Naive thymus-derived CD8-positive, alpha-beta T cell (primary cell): ENCODE measurements at regions of chr5 and their contacts with region 1.

Region 1: DNA sequence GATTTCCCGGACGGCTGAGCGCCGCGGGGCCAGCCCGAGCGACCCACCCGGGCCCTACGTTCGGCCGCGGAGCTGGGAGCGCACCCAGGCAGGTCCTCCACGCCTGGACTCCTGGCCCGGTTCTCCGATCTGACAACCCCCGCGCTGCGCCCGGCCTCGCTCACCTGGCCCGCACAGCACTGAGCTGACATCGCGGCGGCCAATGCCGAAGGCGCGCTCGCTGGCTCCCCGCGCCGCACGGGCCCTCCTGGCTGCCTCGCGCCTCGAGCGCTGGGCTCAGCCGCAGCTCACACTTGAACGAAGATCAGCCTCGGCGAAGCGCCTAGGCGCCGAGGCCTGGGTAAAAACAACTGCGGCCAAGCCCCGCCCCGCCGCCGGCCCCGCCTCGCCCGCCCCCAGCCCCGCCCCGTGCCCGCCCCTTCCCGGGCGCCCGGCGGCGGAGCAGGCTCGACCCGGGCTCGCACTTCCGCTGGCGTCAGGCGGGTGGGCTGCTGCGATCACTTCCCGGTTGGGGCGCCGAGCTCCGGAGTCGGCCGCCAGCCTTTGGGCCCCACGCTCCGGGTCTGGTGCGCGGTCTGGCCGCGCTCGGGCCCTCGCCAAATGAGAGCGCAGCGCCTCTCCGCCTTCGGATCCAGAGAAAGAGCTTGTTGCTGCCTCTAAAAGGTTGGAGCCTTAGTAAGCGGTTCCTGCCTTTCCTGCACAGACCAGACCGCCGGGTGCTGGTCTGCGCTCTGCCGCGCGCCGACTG is at the start of gene SERINC5:
- DNase-seq: peak; percentile 80 to 91 (median 85)
- ATAC-seq: peak; percentile 72 to 77
- H3K4me3 Mint-ChIP-seq: peak within 1 kb of the TSS; percentile 90 to 99 (median 98)
- H3K27ac Mint-ChIP-seq: peak within 1 kb of the TSS; percentile 95 to 100 (median 98)
- H3K4me1 Mint-ChIP-seq: peaks cover 33 to 54% (median 49%) of the 10 kb centered on the region in 4 donors
- H3K27me3 Mint-ChIP-seq: no peaks in the 10 kb centered on the region
- polyA plus RNA-seq, gene SERINC5: 21.8 to 30.6 (median 24.1) TPM

Region 2: DNA sequence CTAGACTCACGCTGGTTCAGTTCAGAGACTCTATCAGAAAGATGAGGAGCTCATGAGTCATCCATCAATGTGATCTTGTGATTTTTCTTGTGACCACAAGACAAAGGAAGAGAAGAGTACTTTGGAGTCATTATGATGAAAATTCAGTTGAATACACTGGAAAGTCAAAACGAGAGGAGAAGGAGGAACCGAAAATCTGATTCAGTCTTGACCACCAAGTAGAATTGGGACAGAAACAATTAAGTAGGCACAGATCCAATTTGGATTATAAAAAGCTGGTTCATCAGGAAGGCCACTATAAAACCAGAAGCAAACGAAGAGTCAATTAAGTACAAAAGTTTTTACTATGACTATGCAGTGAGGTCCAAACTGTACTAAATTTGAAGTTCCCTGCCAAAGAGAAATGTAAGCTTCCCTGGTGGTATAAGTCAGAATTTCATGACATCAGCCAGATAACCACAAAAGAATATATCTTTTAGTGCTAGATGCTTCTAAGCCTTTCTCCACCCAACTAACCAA is 129.9 kb before region 1 on chr5:
- POLR2A ChIA-PET with region 1: interaction called, 11 read pairs
- DNase-seq: peak in 1 of 10 donors; percentile 45
- ATAC-seq: peak; percentile 76 to 79
- H3K4me3 Mint-ChIP-seq: peak overlapping the region in 8 of 10 donors; percentile 46 to 76 (median 60)
- H3K27ac Mint-ChIP-seq: peak overlapping the region; percentile 29 to 96 (median 75)
- H3K4me1 Mint-ChIP-seq: peaks cover 35 to 75% (median 65%) of the 10 kb centered on the region in 4 donors
- H3K27me3 Mint-ChIP-seq: no peaks in the 10 kb centered on the region

Region 3: GRCh38 chr5:80141147-80141671 is 114.7 kb before region 1 on chr5:
- POLR2A ChIA-PET with region 1: interaction called, 46 read pairs
- DNase-seq: no peak
- ATAC-seq: no peak
- H3K4me3 Mint-ChIP-seq: peak overlapping the region in 8 of 10 donors; percentile 22 to 78 (median 63)
- H3K27ac Mint-ChIP-seq: peak overlapping the region; percentile 87 to 97 (median 90)
- H3K4me1 Mint-ChIP-seq: peaks cover 38 to 92% (median 82%) of the 10 kb centered on the region in 4 donors
- H3K27me3 Mint-ChIP-seq: no peaks in the 10 kb centered on the region

Region 4: GRCh38 chr5:80181618-80182211 is 74.2 kb before region 1 on chr5:
- POLR2A ChIA-PET with region 1: interaction called, 118 read pairs
- DNase-seq: peak in 9 of 10 donors; percentile 32 to 87 (median 68)
- ATAC-seq: peak; percentile 62 to 68
- H3K4me3 Mint-ChIP-seq: peak overlapping the region; percentile 54 to 90 (median 64)
- H3K27ac Mint-ChIP-seq: peak overlapping the region; percentile 79 to 99 (median 97)
- H3K4me1 Mint-ChIP-seq: peaks cover 53 to 89% (median 89%) of the 10 kb centered on the region in 4 donors
- H3K27me3 Mint-ChIP-seq: no peaks in the 10 kb centered on the region

Region 5: GRCh38 chr5:80204808-80205614 is 50.9 kb before region 1 on chr5:
- POLR2A ChIA-PET with region 1: interaction called, 50 read pairs
- DNase-seq: peak in 2 of 10 donors; percentile 48 to 53
- ATAC-seq: peak; percentile 77 to 90
- H3K4me3 Mint-ChIP-seq: peak overlapping the region; percentile 49 to 82 (median 58)
- H3K27ac Mint-ChIP-seq: peak overlapping the region; percentile 84 to 96 (median 92)
- H3K4me1 Mint-ChIP-seq: peaks cover 43 to 92% (median 88%) of the 10 kb centered on the region in 4 donors
- H3K27me3 Mint-ChIP-seq: no peaks in the 10 kb centered on the region

Region 6: GRCh38 chr5:80231243-80231642 is 24.7 kb before region 1 on chr5:
- POLR2A ChIA-PET with region 1: interaction called, 20 read pairs
- DNase-seq: no peak
- ATAC-seq: no peak
- H3K4me3 Mint-ChIP-seq: peak overlapping the region in 7 of 10 donors; percentile 31 to 70 (median 59)
- H3K27ac Mint-ChIP-seq: peak overlapping the region; percentile 62 to 98 (median 82)
- H3K4me1 Mint-ChIP-seq: peaks cover 38 to 88% (median 81%) of the 10 kb centered on the region in 4 donors
- H3K27me3 Mint-ChIP-seq: no peaks in the 10 kb centered on the region

Region 7: DNA sequence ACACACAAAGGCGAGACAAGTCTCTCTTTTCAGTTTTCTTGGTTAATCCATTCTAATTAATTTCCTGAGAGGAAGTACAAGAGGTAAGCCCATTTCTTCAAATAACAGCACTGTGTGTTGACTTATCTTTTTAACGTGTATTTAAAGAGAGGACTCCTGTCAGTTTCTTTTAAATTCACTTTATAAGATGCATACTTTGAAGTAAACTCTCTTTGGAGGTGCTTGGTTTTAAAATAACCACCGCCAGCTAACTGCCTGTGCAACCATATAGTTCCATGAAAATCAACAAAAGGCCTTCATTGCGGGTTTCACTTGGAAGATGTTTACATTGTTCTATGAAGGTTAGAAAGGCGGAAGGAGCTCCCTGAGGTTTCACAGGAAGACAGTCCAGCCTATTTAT is 13.0 kb after region 1 on chr5:
- POLR2A ChIA-PET with region 1: interaction called, 152 read pairs
- DNase-seq: peak in 3 of 10 donors; percentile 28 to 48 (median 41)
- ATAC-seq: peak; percentile 48 to 54
- H3K4me3 Mint-ChIP-seq: peak overlapping the region; percentile 41 to 81 (median 70)
- H3K27ac Mint-ChIP-seq: peak overlapping the region; percentile 85 to 100 (median 96)
- H3K4me1 Mint-ChIP-seq: peaks cover 26 to 60% (median 48%) of the 10 kb centered on the region in 4 donors
- H3K27me3 Mint-ChIP-seq: no peaks in the 10 kb centered on the region

Region 8: DNA sequence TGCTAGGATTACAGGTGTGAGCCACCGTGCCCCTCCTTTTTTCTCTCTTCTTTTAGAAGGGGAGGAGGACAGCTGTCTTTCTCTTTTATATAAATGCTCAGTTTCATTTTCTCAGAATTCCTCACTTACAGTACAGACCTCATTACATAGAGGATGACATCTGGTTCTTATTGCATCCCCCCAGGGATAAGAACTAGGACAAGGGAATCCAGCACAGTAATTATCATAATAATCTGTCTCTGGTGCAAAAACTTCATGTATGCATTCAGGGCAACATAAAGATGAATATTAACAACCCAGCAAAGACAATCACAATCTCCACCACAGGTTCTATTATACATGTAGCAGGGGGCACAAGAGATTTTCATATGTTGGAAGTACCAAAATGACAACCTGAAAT is 69.0 kb after region 1 on chr5:
- POLR2A ChIA-PET with region 1: no interaction called
- DNase-seq: no peak
- ATAC-seq: no peak
- H3K4me3 Mint-ChIP-seq: no peak overlapping the region
- H3K27ac Mint-ChIP-seq: no peak overlapping the region
- H3K4me1 Mint-ChIP-seq: no peaks in the 10 kb centered on the region
- H3K27me3 Mint-ChIP-seq: peaks cover 0 to 3% (median 0%) of the 10 kb centered on the region in 5 donors

Region 9: DNA sequence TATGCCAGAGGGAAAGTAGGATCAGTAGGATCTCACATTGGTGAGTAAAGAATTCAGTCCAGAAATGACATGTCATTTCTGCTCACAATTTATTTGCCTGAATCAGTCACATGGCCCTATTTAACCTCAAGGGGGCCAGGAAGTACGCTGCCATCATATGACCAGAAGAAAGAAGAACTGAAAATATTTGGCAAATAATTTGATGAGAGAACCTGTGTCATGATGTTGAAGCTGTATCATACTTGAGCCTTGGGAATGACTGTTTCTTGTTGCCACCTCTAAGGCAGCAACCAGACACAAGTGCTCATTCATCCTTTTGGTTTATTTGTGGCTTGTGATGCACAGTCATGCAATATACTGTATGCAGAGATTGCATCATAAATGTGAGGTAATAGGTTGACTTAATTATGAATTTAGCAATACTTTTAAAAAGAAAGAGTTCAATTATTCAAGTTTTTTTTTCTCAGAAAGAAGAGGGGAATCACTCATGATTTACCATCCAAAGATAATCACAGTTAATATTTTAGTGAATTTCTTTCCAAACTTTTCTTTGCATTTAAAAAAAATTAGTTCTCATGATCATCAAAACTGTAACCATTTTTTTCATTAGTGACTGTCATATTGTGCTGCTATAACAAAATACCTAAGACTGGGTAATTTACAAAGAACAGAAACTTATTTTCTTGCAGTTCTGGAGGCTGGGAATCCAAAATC is 143.8 kb after region 1 on chr5:
- POLR2A ChIA-PET with region 1: no interaction called
- DNase-seq: peak in 1 of 10 donors; percentile 12
- ATAC-seq: no peak
- H3K4me3 Mint-ChIP-seq: no peak overlapping the region
- H3K27ac Mint-ChIP-seq: no peak overlapping the region
- H3K4me1 Mint-ChIP-seq: peaks cover 0 to 8% (median 0%) of the 10 kb centered on the region in 4 donors
- H3K27me3 Mint-ChIP-seq: peaks cover 3 to 15% (median 10%) of the 10 kb centered on the region in 5 donors